Head of caudate nucleus (tissue), 42 donors: ENCODE measurements at regions of chr6 and their contacts with region 1.

Region 1: GRCh38 chr6:39302669-39303424 is 11.4 kb downstream of the KCNK17 start:
- DNase-seq: peak; percentile 71 to 92 (median 83)

Region 2: DNA sequence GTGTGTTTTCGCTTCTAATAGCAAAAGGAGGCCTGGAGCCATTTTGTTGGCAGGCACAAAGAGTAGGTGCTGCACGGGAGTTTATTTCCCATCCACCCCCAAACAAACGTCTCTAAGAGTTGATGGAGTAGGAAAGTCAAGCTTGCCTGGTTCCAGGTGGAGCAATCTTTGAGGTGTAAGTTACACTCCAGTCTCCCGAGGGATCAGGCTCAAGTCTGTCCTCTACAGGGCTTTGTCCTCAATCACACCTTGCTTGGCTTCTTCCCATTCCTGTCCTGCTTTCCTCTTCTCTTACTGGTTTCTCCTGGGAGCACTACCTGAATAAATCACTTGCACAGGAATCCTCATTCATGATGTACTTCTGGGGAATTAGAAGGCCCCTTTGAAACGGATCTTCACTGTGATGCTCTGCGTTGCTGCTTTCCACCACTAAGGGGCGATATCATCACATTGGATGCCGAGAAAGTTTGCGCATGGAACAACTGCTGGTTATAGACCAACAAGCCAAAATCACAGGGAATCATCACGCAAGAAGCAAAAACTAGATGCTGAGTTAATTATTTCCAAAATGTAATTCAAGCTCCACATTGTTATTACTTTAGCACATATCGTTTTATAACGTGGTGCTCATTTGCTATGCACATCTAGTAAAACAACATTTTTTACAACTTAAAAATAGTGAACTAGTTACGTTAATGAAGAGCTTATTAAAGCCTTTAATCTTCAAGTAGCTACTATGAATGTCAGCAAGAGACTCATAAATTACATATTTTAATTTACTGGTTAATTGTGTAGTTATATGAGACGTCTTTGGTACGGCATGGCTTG is 430.9 kb before region 1 on chr6:
- intact Hi-C with region 1: loop called (anchors 5 kb)
- DNase-seq: peak in 41 of 42 donors; percentile 4 to 84 (median 58)

Region 3: DNA sequence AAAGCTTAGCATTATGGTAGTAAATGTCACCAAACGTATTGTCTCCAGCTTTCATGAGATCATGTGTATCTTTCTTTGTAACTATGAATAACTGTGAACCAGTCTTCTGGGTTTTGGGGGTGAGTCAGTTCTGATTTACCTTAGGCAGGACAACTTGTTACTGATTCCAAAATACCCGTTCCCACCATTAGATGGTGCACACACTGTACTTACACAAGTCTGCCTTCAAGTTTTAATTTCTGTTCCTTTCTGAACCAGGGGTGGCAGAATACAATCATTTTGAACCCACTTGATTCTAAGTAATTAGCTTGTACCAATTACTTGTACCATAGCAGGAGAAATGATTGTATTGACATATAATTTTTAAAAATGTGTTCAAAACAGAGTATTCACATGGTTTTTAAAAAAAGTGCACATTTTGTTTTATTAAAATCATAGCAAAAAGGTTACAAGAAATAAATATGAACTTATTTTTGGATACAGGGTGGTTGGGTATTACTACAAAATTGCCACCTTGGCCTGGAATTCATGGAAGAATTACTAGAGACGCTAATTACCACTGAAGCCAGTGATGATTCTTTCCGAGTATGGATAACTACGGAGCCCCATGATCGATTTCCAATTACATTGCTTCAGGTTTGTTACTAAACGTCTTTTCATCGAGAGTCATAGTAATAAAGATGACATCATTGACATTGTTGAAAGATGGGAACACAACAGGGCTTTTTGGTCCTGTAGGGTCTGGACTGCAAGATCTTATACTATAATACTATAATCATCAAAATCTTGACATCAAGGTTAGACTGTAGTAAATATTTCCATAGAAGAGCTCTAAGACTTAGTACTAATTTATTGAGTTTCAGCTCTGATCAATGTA is 329.4 kb before region 1 on chr6:
- intact Hi-C with region 1: loop called (anchors 10 kb)
- DNase-seq: peak in 15 of 42 donors; percentile 7 to 57 (median 23)

Region 4: DNA sequence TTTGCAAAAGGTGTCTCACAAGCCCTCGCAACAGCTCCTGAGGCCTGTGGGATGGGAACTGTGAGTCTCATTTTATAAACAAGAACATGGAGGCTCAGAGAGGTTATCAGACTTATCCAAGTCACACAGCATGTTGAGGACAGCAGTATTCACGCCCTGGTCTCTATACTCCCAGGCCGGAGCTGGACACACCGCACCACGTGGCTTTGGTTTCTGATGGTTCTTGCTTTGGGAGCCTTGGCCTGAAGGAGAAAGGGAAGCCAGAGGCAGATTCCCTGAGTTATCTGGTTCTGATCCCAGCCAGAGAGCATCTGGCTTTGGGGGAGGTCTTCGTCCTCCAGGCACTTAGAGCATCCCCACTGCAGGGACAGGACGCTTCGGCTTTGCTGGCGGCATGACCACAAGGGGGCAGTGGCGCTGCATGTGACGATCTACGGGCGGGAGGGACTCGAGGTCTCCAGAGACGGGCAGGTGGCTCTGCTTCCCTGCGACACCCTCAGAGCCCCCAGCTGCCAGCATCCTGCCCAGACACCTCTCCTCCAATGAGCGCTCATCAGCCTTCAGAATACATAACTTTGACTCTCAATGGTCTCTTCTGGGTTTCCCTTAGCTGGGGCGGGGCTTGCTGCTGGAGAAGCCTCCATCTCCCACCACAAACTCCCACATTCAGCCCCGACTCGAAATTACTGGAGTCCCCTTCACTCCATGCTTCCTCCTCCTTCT is 136.5 kb before region 1 on chr6:
- intact Hi-C with region 1: loop called (anchors 2 kb)
- DNase-seq: peak; percentile 61 to 93 (median 84)

Region 5: DNA sequence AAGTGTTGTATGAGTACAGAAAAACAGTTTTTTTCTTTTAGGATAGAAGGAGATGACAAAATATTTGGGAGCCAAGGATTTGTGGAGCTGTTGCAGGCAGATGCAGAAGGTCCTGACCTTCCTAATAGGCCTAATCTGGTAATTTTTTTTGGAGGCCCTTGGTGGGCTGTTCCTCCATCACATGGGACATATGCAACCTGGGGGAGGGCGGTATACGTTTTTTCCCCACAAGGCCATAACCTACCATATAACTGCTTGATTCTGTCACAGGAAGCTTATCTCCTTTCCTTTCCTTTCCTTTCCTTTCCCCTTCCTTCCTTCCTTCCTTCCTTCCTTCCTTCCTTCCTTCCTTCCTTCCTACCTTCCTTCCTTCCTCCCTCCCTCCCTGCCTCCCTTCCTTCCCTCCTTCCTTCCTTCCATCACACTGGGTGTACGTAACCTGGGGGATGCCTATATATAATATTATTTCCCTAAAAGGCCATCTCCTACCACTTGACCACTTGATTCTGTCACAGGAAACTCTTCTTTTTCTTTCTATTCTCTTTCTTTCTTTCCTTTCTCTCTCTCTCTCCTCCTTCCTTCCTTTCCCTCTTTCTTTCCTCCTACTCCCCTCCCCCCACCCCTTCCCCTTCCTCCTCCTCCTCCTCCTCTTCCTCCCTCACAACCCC is 204.6 kb after region 1 on chr6:
- intact Hi-C with region 1: no loop called
- DNase-seq: no peak